PC-9 (cell line): ENCODE measurements at regions of chr6 and their contacts with region 1.

Region 1: GRCh38 chr6:121055572-121056163 is 278.6 kb downstream of the TBC1D32 start:
- DNase-seq: peak in 1 of 2 experiments; percentile 8
- H3K4me3 ChIP-seq: no peak overlapping the region
- H3K27ac ChIP-seq: no peak overlapping the region
- H3K4me1 ChIP-seq: no peaks in the 10 kb centered on the region
- H3K27me3 ChIP-seq: no peaks in the 10 kb centered on the region
- CTCF ChIP-seq: peak; percentile 93

Region 2: DNA sequence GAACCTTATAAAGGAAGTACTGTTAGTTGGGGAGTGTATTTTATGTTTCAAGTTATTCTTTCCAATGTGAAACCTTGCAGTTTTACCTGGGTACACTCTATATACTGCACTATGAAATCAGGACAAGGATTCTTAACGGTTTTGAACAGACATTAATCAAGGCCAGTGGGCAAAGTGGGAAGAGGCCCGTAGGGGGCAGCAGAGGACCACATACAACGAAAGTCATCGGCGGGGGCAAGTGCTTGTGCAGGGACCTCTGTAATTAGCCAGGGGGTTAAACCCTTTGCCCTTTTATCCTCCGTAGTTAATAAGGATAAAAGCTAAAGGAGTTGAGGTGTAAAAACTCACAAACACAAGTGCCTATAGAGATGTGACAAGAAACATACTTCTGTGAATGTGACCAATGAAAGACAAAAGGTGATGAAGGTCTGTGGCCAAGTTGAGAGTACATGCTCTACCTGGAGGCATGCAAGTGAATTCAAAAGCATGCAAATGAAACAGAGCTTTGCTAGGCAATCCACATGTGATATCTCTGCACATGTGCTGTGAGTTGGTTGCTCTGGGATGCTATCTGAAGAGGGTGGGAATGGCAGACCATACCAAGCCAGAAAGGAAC is 1313.4 kb before region 1 on chr6:
- CTCF ChIA-PET with region 1: no interaction called
- POLR2A ChIA-PET with region 1: no interaction called
- intact Hi-C with region 1: loop called (anchors 10 kb)
- DNase-seq: peak in 1 of 2 experiments; percentile 45
- H3K4me3 ChIP-seq: peak overlapping the region; percentile 12; the same call in 1 of the 2 replicates
- H3K27ac ChIP-seq: no peak overlapping the region
- H3K4me1 ChIP-seq: no peaks in the 10 kb centered on the region
- H3K27me3 ChIP-seq: no peaks in the 10 kb centered on the region
- CTCF ChIP-seq: peak; percentile 99

Region 3: GRCh38 chr6:121032268-121033006 is 23.2 kb before region 1 on chr6:
- CTCF ChIA-PET with region 1: no interaction called
- POLR2A ChIA-PET with region 1: no interaction called
- intact Hi-C with region 1: no loop called
- DNase-seq: no peak
- H3K4me3 ChIP-seq: no peak overlapping the region
- H3K27ac ChIP-seq: no peak overlapping the region
- H3K4me1 ChIP-seq: no peaks in the 10 kb centered on the region
- H3K27me3 ChIP-seq: no peaks in the 10 kb centered on the region
- CTCF ChIP-seq: no peak

Region 4: DNA sequence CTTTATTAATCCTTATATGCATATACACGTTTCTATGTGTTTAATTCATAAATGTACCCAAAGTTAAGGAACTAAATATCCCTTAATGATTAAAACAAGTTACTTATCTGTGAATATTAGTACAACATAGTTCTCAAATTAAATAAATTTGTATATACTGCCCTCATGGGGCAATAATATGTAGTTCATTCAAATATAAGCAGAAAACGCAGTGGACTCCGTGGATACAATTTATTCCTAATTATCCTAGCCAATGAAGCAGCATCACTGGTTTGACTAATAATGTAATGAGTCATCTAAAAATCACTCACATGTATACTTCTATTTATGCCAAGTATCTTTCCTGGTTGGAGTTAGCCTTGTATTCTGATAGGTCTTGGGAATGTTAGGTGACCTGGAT is 167.0 kb after region 1 on chr6:
- CTCF ChIA-PET with region 1: no interaction called
- POLR2A ChIA-PET with region 1: no interaction called
- intact Hi-C with region 1: loop called (anchors 1 kb)
- DNase-seq: peak in 1 of 2 experiments; percentile 48
- H3K4me3 ChIP-seq: no peak overlapping the region
- H3K27ac ChIP-seq: no peak overlapping the region
- H3K4me1 ChIP-seq: no peaks in the 10 kb centered on the region
- H3K27me3 ChIP-seq: no peaks in the 10 kb centered on the region
- CTCF ChIP-seq: peak; percentile 74

Region 5: DNA sequence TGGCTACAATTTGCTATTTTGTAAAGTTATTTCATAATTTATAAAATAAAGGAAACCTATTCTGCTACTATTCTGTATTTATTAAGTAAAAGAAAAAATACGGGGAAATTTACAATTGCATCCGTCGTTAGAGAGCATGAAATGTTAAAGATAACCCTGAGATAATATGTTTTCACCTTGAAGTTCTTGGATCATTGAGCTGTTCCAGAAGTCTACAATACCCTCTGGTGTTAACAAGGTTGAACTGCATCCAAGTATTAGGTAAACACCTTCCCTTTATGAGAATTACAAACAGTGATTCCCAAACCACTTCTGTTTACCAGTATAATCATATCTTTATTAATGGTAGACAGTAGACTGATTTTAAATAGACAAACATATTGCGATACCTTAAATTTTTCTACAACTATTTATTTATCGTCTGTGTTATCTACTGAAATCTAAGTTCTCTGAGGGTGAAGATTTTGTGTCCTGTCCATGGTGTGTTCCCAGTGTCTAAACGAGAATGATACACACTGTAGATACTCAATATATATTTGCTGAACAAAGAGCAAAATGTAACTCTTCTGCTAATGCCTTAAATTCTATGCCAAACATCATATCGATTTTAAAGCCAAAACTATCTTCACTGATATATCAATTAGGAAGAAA is 250.4 kb after region 1 on chr6:
- CTCF ChIA-PET with region 1: no interaction called
- POLR2A ChIA-PET with region 1: no interaction called
- intact Hi-C with region 1: loop called (anchors 1 kb)
- DNase-seq: peak in 1 of 2 experiments; percentile 49
- H3K4me3 ChIP-seq: no peak overlapping the region
- H3K27ac ChIP-seq: no peak overlapping the region
- H3K4me1 ChIP-seq: no peaks in the 10 kb centered on the region
- H3K27me3 ChIP-seq: no peaks in the 10 kb centered on the region
- CTCF ChIP-seq: peak; percentile 92

Region 6: GRCh38 chr6:121319112-121319553 is 263.5 kb after region 1 on chr6:
- CTCF ChIA-PET with region 1: no interaction called
- POLR2A ChIA-PET with region 1: no interaction called
- intact Hi-C with region 1: no loop called
- DNase-seq: no peak
- H3K4me3 ChIP-seq: no peak overlapping the region
- H3K27ac ChIP-seq: no peak overlapping the region
- H3K4me1 ChIP-seq: no peaks in the 10 kb centered on the region
- H3K27me3 ChIP-seq: no peaks in the 10 kb centered on the region
- CTCF ChIP-seq: no peak

Region 7: GRCh38 chr6:121413879-121414278 is 358.2 kb after region 1 on chr6:
- CTCF ChIA-PET with region 1: no interaction called
- POLR2A ChIA-PET with region 1: no interaction called
- intact Hi-C with region 1: loop called (anchors 10 kb)
- DNase-seq: no peak
- H3K4me3 ChIP-seq: no peak overlapping the region
- H3K27ac ChIP-seq: no peak overlapping the region
- H3K4me1 ChIP-seq: no peaks in the 10 kb centered on the region
- H3K27me3 ChIP-seq: no peaks in the 10 kb centered on the region
- CTCF ChIP-seq: no peak

Region 8: DNA sequence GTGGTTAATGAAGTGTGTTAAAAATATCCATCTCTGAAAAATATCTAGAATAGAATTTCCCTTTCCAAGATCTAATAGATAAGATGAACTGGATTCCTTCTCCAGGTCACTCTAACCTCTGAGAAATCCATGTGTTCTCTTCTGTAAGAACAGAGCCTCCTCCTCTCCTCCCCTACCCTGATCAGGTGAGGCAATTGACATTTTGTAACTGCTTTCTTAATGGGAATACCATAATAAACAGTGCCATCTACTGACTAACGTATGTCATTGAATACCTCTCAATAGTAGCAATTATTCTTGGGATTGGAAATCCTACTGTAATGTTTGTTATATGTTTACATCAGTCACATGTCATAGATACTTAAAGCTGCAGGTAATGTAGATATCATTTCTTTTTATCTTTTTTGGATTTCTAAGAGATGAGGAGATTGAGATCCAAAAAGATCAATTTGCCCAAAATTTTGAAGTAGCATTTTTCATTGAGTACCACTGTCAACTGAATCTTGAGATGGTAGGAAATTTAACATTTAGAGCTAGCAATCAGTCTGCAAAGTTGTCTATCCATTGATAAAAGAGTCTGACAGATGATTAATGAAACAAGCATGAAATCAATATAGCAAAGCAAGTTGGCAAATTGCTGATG is 978.0 kb after region 1 on chr6:
- CTCF ChIA-PET with region 1: no interaction called
- POLR2A ChIA-PET with region 1: interaction called, 3 read pairs
- intact Hi-C with region 1: loop called (anchors 5 kb)
- DNase-seq: peak in 1 of 2 experiments; percentile 76
- H3K4me3 ChIP-seq: no peak overlapping the region
- H3K27ac ChIP-seq: no peak overlapping the region
- H3K4me1 ChIP-seq: peaks cover 13% of the 10 kb centered on the region
- H3K27me3 ChIP-seq: no peaks in the 10 kb centered on the region
- CTCF ChIP-seq: peak; percentile 92

Region 9: DNA sequence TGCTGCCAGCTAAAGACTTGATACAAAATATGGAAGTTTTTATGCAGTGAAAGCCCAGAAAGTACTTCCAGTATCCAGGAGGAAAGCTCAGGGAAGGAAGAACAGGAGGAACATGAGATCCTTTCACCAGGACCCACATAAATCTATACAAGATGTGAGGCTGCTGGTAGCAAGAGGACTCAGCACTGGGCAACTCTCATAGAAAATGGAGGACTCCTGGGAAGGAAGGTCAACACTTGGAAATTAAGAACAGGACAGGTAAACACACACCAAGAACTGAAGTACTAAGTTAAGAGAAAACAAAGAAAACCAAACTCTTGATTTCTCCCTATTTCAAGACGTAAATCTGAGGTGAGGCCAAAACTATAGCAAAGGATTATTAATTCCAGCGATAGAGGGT is 1123.3 kb after region 1 on chr6:
- CTCF ChIA-PET with region 1: no interaction called
- POLR2A ChIA-PET with region 1: interaction called, 28 read pairs
- intact Hi-C with region 1: no loop called
- DNase-seq: no peak
- H3K4me3 ChIP-seq: no peak overlapping the region
- H3K27ac ChIP-seq: no peak overlapping the region
- H3K4me1 ChIP-seq: no peaks in the 10 kb centered on the region
- H3K27me3 ChIP-seq: no peaks in the 10 kb centered on the region
- CTCF ChIP-seq: no peak